Dorsolateral prefrontal cortex (tissue), 120 donors: ENCODE measurements at regions of chr12 and their contacts with region 1.

Region 1: GRCh38 chr12:105382771-105383622 is 52.5 kb downstream of the C12orf75 start:
- DNase-seq: no peak
- H3K4me3 ChIP-seq: peak overlapping the region in 57 of 59 donors; percentile 5 to 60 (median 36)
- H3K27ac ChIP-seq: no peak overlapping the region
- H3K27me3 ChIP-seq: no peaks in the 10 kb centered on the region
- CTCF ChIP-seq: peak; percentile 47 to 87 (median 75)

Region 2: GRCh38 chr12:105279460-105280056 is 103.4 kb before region 1 on chr12:
- intact Hi-C with region 1: loop called in 1 of 2 experiments (anchors 10 kb)
- DNase-seq: peak in 2 of 10 donors; percentile 9 to 31
- H3K4me3 ChIP-seq: no peak overlapping the region
- H3K27ac ChIP-seq: no peak overlapping the region
- H3K27me3 ChIP-seq: peaks cover 0 to 4% (median 0%) of the 10 kb centered on the region in 45 donors
- CTCF ChIP-seq: peak; percentile 32 to 74 (median 59)